GM23248 (cell line): ENCODE measurements at regions of chr7 and their contacts with region 1.

Region 1: DNA sequence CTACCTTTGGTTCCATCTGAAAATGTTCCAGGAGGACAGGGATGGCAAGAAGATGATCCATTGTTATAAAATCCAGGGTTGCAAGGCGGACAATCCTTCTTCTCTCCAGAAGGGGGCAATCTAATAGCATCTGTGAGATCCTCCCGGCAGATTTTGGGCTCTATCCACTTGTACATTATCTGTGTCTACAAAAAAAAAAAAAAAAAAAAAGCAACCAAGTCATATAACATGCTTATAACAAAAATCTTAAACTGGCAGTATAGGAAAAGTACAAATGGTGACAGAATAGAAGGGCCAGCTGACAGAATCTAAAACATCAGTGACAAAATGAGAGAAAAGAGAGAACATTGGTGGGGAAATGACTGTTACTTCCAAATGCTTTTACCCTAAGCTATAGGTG is 132.7 kb downstream of the ELAPOR2 start:
- DNase-seq: peak; percentile 85
- H3K4me3 ChIP-seq: no peak overlapping the region
- H3K27ac ChIP-seq: no peak overlapping the region
- H3K4me1 ChIP-seq: peaks cover 5% of the 10 kb centered on the region
- H3K27me3 ChIP-seq: no peaks in the 10 kb centered on the region

Region 2: DNA sequence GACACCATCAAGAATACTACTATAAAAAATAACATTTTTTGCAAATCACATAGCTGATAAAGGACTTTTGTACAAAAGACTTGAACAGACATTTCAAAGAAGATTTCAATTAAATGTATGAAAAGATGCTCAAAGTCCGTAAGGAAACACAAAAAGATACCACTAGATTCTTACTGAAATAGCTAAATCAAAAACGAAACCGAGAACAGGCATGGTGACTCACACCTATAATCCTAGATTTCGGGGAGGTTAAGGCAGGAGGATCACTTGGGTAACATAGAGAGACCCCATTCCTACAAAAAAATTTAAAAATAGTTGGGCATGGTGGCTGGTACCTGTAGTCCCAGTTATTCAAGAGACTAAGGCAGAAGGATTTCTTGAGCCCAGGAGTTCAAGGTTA is 803.3 kb before region 1 on chr7:
- in situ Hi-C with region 1: no loop called
- DNase-seq: no peak
- H3K4me3 ChIP-seq: no peak overlapping the region
- H3K27ac ChIP-seq: no peak overlapping the region
- H3K4me1 ChIP-seq: no peaks in the 10 kb centered on the region
- H3K27me3 ChIP-seq: no peaks in the 10 kb centered on the region

Region 3: GRCh38 chr7:87231256-87231655 is 304.5 kb after region 1 on chr7:
- in situ Hi-C with region 1: loop called (anchors 10 kb)
- DNase-seq: no peak
- H3K4me3 ChIP-seq: no peak overlapping the region
- H3K27ac ChIP-seq: no peak overlapping the region
- H3K4me1 ChIP-seq: peaks cover 9% of the 10 kb centered on the region
- H3K27me3 ChIP-seq: no peaks in the 10 kb centered on the region

Region 4: GRCh38 chr7:87339373-87339897 is 412.7 kb after region 1 on chr7:
- in situ Hi-C with region 1: no loop called
- DNase-seq: no peak
- H3K4me3 ChIP-seq: no peak overlapping the region
- H3K27ac ChIP-seq: no peak overlapping the region
- H3K4me1 ChIP-seq: peaks cover 24% of the 10 kb centered on the region
- H3K27me3 ChIP-seq: no peaks in the 10 kb centered on the region